Activated CD4-positive, alpha-beta T cell treated with anti-CD3 and anti-CD28 coated beads, Interleukin-2, amount 10 ng/mL, durations not matched to agents 24 days and 14 days (primary cell): ENCODE measurements at regions of chr11 and their contacts with region 1.

Region 1: DNA sequence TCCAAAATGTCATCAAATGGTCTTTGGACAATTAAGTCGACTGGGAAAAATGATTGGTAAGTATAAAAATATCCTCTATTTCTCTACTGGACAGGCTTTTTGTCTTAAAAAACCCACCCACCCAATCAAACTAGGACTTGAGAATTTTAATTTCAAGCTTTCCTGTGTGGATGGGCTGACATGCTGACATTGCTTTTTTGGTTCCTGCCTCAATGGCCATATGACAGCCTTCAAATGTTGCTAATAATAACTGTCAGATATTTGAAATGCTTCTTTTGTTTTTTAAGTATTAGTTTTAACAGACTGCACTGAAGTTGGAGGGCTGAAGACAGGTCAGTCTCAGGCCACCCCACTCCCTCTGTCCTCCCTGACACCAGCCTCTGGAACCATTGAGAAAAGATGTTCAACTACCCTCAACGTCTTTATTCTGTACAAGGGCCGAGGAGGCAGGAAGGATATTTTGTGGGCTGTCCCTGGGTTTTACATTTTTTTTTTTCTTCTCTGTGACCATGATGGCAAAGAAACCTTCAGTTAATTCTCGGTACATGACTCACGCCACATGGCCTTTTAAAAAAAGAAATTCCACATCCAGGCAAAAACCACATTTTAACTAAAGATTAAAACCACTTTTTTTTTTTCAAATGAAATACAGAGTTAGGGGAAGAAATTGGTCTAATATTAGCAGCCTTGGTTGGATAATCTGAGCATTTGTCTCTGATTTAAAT is 130.4 kb downstream of the SLC1A2 start:
- DNase-seq: no peak
- H3K4me3 Mint-ChIP-seq: peak overlapping the region; percentile 19
- H3K27ac Mint-ChIP-seq: peak overlapping the region; percentile 70
- H3K4me1 Mint-ChIP-seq: peaks cover 29% of the 10 kb centered on the region
- H3K27me3 Mint-ChIP-seq: no peaks in the 10 kb centered on the region

Region 2: GRCh38 chr11:35305670-35306382 is 16.8 kb after region 1 on chr11:
- intact Hi-C with region 1: no loop called
- DNase-seq: peak; percentile 75
- H3K4me3 Mint-ChIP-seq: no peak overlapping the region
- H3K27ac Mint-ChIP-seq: peak overlapping the region; percentile 48
- H3K4me1 Mint-ChIP-seq: peaks cover 24% of the 10 kb centered on the region
- H3K27me3 Mint-ChIP-seq: no peaks in the 10 kb centered on the region

Region 3: GRCh38 chr11:35337136-35337918 is 48.3 kb after region 1 on chr11:
- intact Hi-C with region 1: loop called (anchors 1 kb)
- DNase-seq: no peak
- H3K4me3 Mint-ChIP-seq: no peak overlapping the region
- H3K27ac Mint-ChIP-seq: peak overlapping the region; percentile 45
- H3K4me1 Mint-ChIP-seq: peaks cover 32% of the 10 kb centered on the region
- H3K27me3 Mint-ChIP-seq: peaks cover 3% of the 10 kb centered on the region